Body of pancreas (tissue), 4 donors: ENCODE measurements at regions of chr9 and their contacts with region 1.

Region 1: DNA sequence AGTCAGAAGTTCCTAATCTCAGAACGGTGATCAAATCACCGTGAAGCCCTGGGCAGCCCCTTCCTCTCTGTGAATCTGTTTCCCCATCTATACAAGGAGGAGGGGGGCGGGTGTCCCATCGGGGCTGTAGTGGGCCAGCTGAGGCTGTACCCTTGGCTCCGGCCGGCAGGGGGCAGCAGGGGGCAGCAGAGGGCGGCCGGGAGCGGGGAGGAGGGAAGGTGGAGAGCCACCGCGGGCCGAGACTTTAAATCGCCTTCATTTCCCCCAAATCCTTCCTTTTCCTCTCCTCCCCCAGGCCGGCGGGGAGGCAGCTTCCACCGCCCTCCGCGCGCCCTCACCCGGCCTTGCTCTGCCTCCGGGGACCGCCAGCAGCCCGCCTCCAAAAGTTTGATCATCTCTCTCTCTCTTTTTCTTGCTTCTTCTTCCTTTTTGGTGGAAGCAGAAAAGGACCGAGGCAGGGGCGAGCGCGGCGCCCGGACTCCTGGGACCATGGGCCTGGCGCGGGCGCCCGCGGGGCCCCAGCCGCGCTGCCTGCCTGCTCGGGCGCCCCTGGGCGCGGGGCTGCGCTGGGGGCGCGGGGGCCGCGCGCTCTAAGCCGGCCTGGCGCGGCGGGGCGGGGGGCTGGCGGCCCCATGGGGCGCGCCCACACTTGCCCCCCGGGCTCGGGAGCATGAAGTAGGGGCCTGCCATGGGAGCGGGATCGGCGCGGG is at the start of gene COL27A1:
- DNase-seq: peak; percentile 80 to 88 (median 85)
- ATAC-seq: peak; percentile 88
- H3K4me3 ChIP-seq: peak within 1 kb of the TSS; percentile 31 to 50
- H3K27ac ChIP-seq: peak within 1 kb of the TSS in 3 of 4 donors; percentile 42 to 73 (median 72)
- H3K4me1 ChIP-seq: peaks cover 26% of the 10 kb centered on the region
- H3K27me3 ChIP-seq: no peaks in the 10 kb centered on the region
- CTCF ChIP-seq: peak; percentile 91 to 97 (median 93)
- POLR2A ChIP-seq: peak in 2 of 3 donors; percentile 41 to 59
- total RNA-seq, gene COL27A1: 24.1 to 58.0 TPM

Region 2: GRCh38 chr9:113913426-113914195 is 241.8 kb before region 1 on chr9:
- intact Hi-C with region 1: no loop called
- DNase-seq: peak in 3 of 4 donors; percentile 52 to 65 (median 65)
- ATAC-seq: no peak
- H3K4me3 ChIP-seq: no peak overlapping the region
- H3K27ac ChIP-seq: peak overlapping the region; percentile 19 to 92 (median 24)
- H3K4me1 ChIP-seq: peaks cover 56% of the 10 kb centered on the region
- H3K27me3 ChIP-seq: no peaks in the 10 kb centered on the region
- CTCF ChIP-seq: no peak
- POLR2A ChIP-seq: no peak

Region 3: DNA sequence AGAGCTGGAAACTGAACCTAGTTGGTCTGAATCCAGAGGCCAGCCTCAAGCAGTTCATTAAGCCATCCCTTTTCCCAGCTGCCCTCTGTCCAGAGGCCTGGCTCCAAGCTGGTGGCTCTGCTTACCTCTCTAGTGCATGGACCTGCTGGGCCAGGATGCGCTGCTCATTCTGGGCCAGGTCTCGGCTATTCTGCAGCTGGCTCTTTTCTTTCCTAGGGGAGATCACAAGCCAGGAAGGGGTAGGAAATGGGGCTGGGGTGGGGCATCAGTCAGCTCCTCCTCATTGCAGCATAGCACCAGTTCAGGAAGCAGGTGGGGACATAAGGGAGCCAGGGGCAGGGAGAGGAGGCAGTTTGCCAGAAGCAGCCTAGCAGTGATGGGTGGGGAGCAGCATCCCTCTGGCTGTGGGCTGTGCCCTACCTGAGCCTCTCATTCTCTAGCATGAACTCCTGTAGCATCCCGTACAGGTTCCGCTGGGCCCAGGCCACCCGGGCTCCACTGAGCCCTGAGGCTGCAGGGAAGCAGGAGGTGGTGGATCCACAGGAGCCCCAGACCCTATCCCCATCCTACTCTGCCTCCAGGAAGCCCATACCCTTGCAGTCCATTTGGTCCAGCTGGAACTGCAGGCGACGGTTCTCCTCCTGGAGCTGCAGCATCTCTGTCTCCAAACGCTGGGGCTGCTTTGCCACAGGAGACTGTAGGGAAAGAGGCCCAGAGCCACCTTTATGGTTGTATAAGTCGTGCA is 61.5 kb before region 1 on chr9:
- intact Hi-C with region 1: loop called (anchors 5 kb)
- DNase-seq: peak in 1 of 4 donors; percentile 9
- ATAC-seq: no peak
- H3K4me3 ChIP-seq: no peak overlapping the region
- H3K27ac ChIP-seq: no peak overlapping the region
- H3K4me1 ChIP-seq: peaks cover 32% of the 10 kb centered on the region
- H3K27me3 ChIP-seq: no peaks in the 10 kb centered on the region
- CTCF ChIP-seq: no peak
- POLR2A ChIP-seq: no peak

Region 4: DNA sequence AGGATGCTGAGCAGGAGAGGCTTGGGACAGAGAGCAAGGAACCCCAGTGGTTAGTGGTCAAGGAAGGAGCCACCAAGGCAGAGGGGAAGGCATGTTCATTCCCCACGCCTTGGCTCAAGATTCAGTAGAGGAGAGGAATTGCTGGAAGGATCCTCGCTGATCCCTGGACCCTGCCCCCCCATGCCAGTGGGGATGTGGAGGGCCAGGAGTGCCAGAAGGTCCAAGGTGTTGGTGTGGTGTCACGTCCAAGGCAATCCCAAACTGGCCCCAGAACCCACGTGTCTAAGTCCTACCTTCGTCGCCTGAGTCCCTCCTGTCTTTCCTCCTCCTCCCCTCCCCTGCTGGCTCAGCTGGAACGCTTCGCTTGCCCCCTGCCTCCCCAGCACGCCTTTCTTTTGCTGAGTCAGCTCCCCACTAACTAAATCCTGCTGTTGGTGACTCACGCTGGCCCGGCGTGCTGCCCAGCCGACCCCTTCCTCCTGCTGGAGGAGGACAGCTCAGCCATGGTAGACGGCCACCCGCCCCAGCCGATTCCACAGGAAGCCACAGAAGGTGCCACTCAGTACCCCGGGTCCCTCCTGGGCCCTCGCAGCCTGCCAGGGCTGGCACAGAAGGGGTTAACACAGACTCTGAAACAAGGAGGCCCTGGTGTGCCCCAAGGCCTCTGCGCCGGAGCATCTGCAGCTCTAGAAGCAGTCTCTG is 129.9 kb after region 1 on chr9:
- intact Hi-C with region 1: loop called (anchors 5 kb)
- DNase-seq: peak in 3 of 4 donors; percentile 8 to 44 (median 16)
- ATAC-seq: no peak
- H3K4me3 ChIP-seq: no peak overlapping the region
- H3K27ac ChIP-seq: no peak overlapping the region
- H3K4me1 ChIP-seq: peaks cover 8% of the 10 kb centered on the region
- H3K27me3 ChIP-seq: no peaks in the 10 kb centered on the region
- CTCF ChIP-seq: no peak
- POLR2A ChIP-seq: no peak